ENCODE measurements at regions of chr4 and their contacts with region 1.

Region 1: DNA sequence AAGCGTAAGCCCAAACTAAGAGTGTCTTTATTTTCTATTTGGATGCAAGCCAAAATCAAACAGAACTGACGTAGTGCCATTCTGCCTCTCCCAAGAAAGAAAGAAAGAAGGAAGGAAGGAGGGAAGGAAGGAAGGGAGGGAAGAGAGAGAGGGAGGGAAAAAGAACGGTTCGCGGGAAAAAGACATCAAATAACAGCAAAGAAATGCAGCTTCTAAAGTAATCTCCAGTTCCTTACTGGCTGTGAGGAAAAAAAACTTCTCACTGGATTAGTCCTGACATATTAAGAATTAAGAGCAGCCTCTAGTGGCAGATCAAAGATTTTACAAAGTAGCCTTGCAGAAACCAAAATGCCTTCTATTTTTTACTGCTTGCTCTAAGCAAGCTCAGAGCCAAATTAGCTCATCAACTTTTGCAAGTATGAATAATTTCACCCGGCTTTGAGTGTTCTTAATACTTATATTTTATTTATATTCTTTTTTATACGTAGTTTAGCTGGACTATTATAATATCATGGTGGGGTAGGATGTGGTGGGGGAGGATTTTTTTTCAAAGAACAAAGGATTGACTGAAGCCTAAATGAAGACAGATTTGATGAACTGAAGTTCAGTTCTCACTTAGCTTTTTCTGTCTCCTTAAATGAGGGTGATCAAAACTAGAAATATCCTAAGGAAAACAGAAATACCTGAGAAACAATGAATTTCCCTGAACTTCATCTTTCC is 36.6 kb downstream of the PITX2 start:
- DNase-seq: peak in 1 of 2 experiments; percentile 42
- H3K4me3 ChIP-seq: no peak overlapping the region
- H3K27ac ChIP-seq: no peak overlapping the region
- H3K4me1 ChIP-seq: no peaks in the 10 kb centered on the region
- H3K27me3 ChIP-seq: no peaks in the 10 kb centered on the region
- CTCF ChIP-seq: peak; percentile 55

Region 2: DNA sequence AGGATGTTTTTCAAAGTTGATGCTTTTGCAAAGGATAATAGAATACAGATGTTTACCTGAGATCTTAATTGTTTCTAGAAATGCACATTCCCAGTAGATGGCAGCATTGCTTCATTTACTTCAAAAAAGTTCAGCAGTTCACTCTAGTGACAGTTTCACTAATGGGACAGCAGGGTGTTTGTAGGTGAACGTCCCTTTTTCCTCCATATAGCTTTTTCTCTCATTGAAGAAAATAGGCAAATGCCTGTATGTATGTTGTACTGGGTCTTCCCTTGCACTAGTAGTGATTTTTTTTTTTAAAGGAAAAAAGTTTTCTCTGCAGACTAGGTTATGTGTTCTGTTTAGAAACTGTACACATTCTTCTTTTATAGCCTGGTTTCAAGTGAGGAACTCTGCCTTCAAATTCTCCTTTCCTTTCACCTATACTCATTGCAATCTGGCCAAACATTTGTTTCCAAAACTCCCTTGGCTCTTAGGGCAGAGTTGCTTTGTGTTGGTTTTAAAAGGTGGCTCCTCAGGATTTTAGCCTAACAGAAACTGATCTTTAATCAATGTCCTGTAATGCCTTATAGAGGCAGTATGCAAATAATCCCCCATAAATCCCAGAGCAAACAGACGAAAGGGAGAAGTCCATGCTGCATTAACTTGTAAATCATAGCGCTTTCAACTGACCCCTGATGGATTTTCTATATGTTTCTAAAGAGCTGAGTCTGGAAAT is 587.3 kb before region 1 on chr4:
- CTCF ChIA-PET with region 1: no interaction called
- POLR2A ChIA-PET with region 1: no interaction called
- intact Hi-C with region 1: loop called (anchors 2 kb)
- DNase-seq: peak in 1 of 2 experiments; percentile 39
- H3K4me3 ChIP-seq: no peak overlapping the region
- H3K27ac ChIP-seq: no peak overlapping the region
- H3K4me1 ChIP-seq: no peaks in the 10 kb centered on the region
- H3K27me3 ChIP-seq: no peaks in the 10 kb centered on the region
- CTCF ChIP-seq: peak; percentile 69

Region 3: GRCh38 chr4:110344162-110344561 is 242.1 kb before region 1 on chr4:
- CTCF ChIA-PET with region 1: interaction called, 11 read pairs
- POLR2A ChIA-PET with region 1: no interaction called
- intact Hi-C with region 1: no loop called
- DNase-seq: no peak
- H3K4me3 ChIP-seq: no peak overlapping the region
- H3K27ac ChIP-seq: no peak overlapping the region
- H3K4me1 ChIP-seq: no peaks in the 10 kb centered on the region
- H3K27me3 ChIP-seq: no peaks in the 10 kb centered on the region
- CTCF ChIP-seq: peak; percentile 57

Region 4: GRCh38 chr4:110516106-110516922 is 70.0 kb before region 1 on chr4:
- CTCF ChIA-PET with region 1: interaction called, 18 read pairs
- POLR2A ChIA-PET with region 1: no interaction called
- intact Hi-C with region 1: loop called (anchors 1 kb)
- DNase-seq: peak; percentile 64 to 72
- H3K4me3 ChIP-seq: peak overlapping the region; percentile 53; the same call in 1 of the 2 replicates
- H3K27ac ChIP-seq: no peak overlapping the region
- H3K4me1 ChIP-seq: no peaks in the 10 kb centered on the region
- H3K27me3 ChIP-seq: no peaks in the 10 kb centered on the region
- CTCF ChIP-seq: peak; percentile 78

Region 5: DNA sequence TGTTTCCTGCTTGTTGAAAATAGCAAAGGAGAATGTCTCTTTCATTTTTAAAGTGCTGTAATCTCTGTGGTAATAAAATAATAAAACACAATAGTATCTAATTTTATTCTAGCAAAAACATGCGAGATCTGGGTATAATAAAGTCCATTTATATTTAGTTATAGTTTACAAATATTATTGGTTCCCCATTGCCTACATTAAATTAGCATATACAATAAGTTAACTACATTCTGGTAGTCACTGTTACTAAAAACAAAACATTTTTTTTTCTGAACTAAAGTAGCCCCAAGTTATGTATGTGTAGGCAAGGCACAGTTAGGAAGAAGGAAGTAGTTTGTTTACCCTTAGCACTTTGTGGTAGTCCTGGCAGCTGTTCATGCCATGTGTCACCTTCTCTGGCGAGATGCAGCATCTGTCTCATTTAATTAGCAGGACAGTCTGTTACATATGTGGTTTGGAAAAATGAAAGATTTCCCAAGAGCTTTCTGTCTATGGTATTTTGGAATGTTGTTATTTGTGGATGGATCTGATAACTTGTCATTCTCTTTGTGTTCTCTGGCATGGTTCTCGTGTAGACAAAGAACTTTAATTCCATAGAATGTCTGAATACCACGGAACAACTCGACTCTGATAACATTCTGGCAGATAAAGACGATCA is 267.9 kb after region 1 on chr4:
- CTCF ChIA-PET with region 1: no interaction called
- POLR2A ChIA-PET with region 1: no interaction called
- intact Hi-C with region 1: no loop called
- DNase-seq: peak; percentile 15 to 48
- H3K4me3 ChIP-seq: no peak overlapping the region
- H3K27ac ChIP-seq: no peak overlapping the region
- H3K4me1 ChIP-seq: no peaks in the 10 kb centered on the region
- H3K27me3 ChIP-seq: no peaks in the 10 kb centered on the region
- CTCF ChIP-seq: no peak

Measured in PC-9 (cell line).